Activated CD4-positive, alpha-beta T cell treated with anti-CD3 and anti-CD28 coated beads for 36 hours (primary cell): ENCODE measurements at regions of chr3 and their contacts with region 1.

Region 1: GRCh38 chr3:69306239-69307185 is 79.4 kb downstream of the FRMD4B start:
- DNase-seq: peak; percentile 83
- ATAC-seq: peak; percentile 89
- H3K4me3 Mint-ChIP-seq: no peak overlapping the region
- H3K27ac Mint-ChIP-seq: no peak overlapping the region
- H3K4me1 Mint-ChIP-seq: peaks cover 21% of the 10 kb centered on the region
- H3K27me3 Mint-ChIP-seq: no peaks in the 10 kb centered on the region

Region 2: DNA sequence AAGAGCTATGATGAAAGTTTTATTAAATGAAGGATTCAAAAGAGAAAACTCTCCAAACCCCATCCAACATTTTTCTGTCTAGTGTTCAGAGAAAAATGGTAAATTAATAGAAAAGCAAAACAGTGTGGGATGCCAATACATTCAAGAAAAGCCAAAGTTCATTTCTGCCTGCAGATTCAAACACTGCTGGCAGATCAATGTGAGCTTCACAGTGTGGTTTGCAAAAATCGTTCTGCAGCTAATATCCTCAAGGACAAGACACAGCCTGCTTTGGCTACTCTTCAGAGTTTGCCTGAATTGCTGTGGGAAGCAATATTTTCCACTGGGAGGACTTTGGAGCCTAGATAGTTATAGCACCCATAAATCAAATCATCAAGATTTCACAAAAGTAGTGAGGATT is 1032.2 kb before region 1 on chr3:
- CTCF ChIA-PET with region 1: no interaction called
- POLR2A ChIA-PET with region 1: no interaction called
- intact Hi-C with region 1: no loop called
- DNase-seq: no peak
- ATAC-seq: no peak
- H3K4me3 Mint-ChIP-seq: no peak overlapping the region
- H3K27ac Mint-ChIP-seq: no peak overlapping the region
- H3K4me1 Mint-ChIP-seq: no peaks in the 10 kb centered on the region
- H3K27me3 Mint-ChIP-seq: no peaks in the 10 kb centered on the region

Region 3: GRCh38 chr3:69174871-69175737 is 131.4 kb before region 1 on chr3:
- CTCF ChIA-PET with region 1: interaction called, 12 read pairs
- POLR2A ChIA-PET with region 1: no interaction called
- intact Hi-C with region 1: no loop called
- DNase-seq: no peak
- ATAC-seq: no peak
- H3K4me3 Mint-ChIP-seq: no peak overlapping the region
- H3K27ac Mint-ChIP-seq: no peak overlapping the region
- H3K4me1 Mint-ChIP-seq: peaks cover 21% of the 10 kb centered on the region
- H3K27me3 Mint-ChIP-seq: no peaks in the 10 kb centered on the region

Region 4: DNA sequence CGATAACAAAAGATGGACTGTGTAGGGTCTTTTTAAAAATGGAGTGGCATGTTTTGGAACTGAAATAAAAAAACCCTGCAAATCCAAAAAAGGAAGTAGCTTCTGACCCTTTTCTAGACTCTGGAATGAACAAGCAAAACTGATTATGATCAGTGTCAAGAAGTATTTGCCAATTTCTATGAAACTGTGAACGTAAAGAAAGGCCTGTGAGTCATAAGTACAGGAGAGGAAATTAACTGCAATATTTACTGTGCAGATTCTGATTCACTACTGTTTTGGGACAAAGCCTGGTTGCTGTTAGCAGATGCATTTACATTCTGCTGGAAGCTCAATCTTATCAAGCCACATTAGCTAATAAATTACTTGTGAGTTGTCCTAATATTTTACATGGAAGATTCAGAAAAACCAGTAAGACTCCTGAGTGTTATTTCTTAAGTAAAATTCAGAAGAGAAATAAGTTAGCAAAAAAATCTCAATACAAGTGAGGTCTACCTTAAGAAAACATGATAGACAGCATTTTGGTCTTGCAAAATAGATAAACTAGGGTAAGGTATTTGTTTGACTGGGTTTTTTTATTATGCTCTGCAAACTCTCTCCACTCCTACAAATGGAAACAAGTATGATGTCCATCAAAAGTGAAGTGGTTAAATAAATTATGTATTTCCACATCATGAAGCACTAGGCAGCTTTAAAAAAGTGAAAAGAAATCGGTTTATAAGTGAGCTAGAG is 93.9 kb before region 1 on chr3:
- CTCF ChIA-PET with region 1: interaction called, 18 read pairs
- POLR2A ChIA-PET with region 1: no interaction called
- intact Hi-C with region 1: loop called in 1 of 2 experiments (anchors 1 kb)
- DNase-seq: no peak
- ATAC-seq: peak; percentile 88
- H3K4me3 Mint-ChIP-seq: no peak overlapping the region
- H3K27ac Mint-ChIP-seq: peak overlapping the region; percentile 58
- H3K4me1 Mint-ChIP-seq: peaks cover 32% of the 10 kb centered on the region
- H3K27me3 Mint-ChIP-seq: peaks cover 3% of the 10 kb centered on the region

Region 5: GRCh38 chr3:69288161-69288895 is 18.2 kb before region 1 on chr3:
- CTCF ChIA-PET with region 1: interaction called, 31 read pairs
- POLR2A ChIA-PET with region 1: interaction called, 3 read pairs
- intact Hi-C with region 1: loop called in 1 of 2 experiments (anchors 2 kb)
- DNase-seq: peak; percentile 77
- ATAC-seq: peak; percentile 97
- H3K4me3 Mint-ChIP-seq: peak overlapping the region; percentile 20
- H3K27ac Mint-ChIP-seq: peak overlapping the region; percentile 16
- H3K4me1 Mint-ChIP-seq: peaks cover 22% of the 10 kb centered on the region
- H3K27me3 Mint-ChIP-seq: no peaks in the 10 kb centered on the region

Region 6: GRCh38 chr3:69425261-69425660 is 118.7 kb after region 1 on chr3:
- CTCF ChIA-PET with region 1: interaction called, 4 read pairs
- POLR2A ChIA-PET with region 1: no interaction called
- intact Hi-C with region 1: loop called in 1 of 2 experiments (anchors 2 kb)
- DNase-seq: peak; percentile 52
- ATAC-seq: peak; percentile 74
- H3K4me3 Mint-ChIP-seq: no peak overlapping the region
- H3K27ac Mint-ChIP-seq: no peak overlapping the region
- H3K4me1 Mint-ChIP-seq: peaks cover 2% of the 10 kb centered on the region
- H3K27me3 Mint-ChIP-seq: peaks cover 5% of the 10 kb centered on the region